IMR-90 (cell line): ENCODE measurements at regions of chr6 and their contacts with region 1.

Region 1: DNA sequence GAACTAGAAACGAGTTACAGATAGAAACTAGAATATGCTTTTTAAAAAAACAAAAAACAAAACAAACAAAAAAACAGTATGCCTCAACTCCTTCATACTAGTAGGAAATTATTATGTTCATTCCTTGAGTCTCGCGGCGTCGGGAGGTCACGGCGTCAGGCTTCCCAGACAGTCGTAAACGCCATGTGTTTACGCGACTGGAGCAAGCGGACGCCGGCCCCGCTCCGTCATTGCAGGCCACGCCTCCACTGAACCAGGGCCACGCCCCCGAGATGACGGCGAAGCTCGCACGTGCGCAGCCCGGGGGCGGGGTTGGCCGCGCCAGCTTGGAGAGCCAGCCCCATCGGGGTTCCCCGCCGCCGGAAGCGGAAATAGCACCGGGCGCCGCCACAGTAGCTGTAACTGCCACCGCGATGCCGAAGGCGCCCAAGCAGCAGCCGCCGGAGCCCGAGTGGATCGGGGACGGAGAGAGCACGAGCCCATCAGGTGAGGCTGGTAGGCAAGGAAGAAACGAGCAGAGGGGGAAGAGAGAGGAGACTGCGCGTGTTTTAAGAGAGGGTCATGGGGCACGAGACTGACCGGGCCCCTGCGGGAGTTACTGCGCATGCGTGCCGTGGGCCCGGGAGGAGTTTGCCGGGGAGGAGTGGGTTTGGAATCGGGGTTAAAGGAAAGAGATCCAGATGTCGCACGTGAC is at the start of gene ABCF1:
- DNase-seq: peak; percentile 96
- ATAC-seq: peak; percentile 98
- H3K4me3 ChIP-seq: peak within 1 kb of the TSS; percentile 74
- H3K27ac ChIP-seq: peak within 1 kb of the TSS; percentile 95
- H3K4me1 ChIP-seq: peaks cover 3% of the 10 kb centered on the region
- H3K27me3 ChIP-seq: no peaks in the 10 kb centered on the region
- CTCF ChIP-seq: no peak
- POLR2A ChIP-seq: peak; percentile 93
- RAD21 ChIP-seq: no peak
- total RNA-seq, gene ABCF1: 47.5 and 48.6 TPM in 2 replicates

Region 2: DNA sequence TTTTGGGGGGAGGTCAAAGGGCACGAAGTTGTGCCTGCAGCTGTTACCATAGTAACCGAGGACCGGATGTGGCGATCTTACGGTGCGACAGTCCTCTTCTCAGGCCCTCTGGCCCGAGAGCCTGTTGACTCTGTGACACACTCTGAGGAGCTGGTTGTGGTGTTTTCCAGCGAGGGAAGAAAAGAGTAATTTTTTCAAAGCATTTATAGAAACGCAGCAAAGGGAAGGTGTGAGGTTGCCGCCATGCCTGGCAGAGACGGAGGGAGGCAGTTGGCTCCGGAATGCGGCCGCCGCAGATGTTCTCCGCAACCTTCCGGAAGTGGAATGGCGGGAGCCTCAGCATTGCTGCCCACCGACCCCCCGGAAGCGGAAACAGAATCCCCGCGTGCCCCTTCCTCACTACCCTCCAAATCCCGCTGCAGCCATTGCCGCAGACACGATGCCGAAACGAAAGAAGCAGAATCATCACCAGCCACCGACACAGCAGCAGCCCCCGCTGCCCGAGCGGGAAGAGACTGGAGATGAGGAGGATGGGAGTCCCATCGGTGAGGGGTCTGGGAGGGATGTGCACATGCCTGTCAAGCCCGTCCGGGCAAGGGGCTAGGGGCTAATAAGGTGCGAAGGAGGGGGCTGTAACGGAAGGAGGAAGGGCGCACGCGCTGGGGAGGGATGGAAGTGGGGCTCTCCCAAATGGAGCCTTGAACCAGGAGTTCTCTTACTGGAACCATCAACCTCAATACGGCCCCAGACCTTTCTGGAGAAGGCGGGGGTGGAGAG is 14.1 kb before region 1 on chr6 and contains the start of gene PRR3:
- CTCF ChIA-PET with region 1: no interaction called
- POLR2A ChIA-PET with region 1: interaction called, 6 read pairs
- dilution Hi-C with region 1: no loop called
- in situ Hi-C with region 1: no loop called
- intact Hi-C with region 1: loop called (anchors 1 kb)
- DNase-seq: peak; percentile 88
- ATAC-seq: peak; percentile 67
- H3K4me3 ChIP-seq: peak within 1 kb of the TSS; percentile 94
- H3K27ac ChIP-seq: peak within 1 kb of the TSS; percentile 96
- H3K4me1 ChIP-seq: peaks cover 2% of the 10 kb centered on the region
- H3K27me3 ChIP-seq: no peaks in the 10 kb centered on the region
- CTCF ChIP-seq: no peak
- POLR2A ChIP-seq: peak; percentile 56; the same call in 1 of the 2 replicates
- RAD21 ChIP-seq: no peak
- total RNA-seq, gene PRR3: 7.2 TPM in 2 replicates

Region 3: GRCh38 chr6:30741063-30741779 is 170.0 kb after region 1 on chr6:
- CTCF ChIA-PET with region 1: no interaction called
- POLR2A ChIA-PET with region 1: no interaction called
- dilution Hi-C with region 1: no loop called
- in situ Hi-C with region 1: no loop called
- intact Hi-C with region 1: no loop called
- DNase-seq: peak; percentile 45
- ATAC-seq: no peak
- H3K4me3 ChIP-seq: peak overlapping the region; percentile 96
- H3K27ac ChIP-seq: peak overlapping the region; percentile 97
- H3K4me1 ChIP-seq: peaks cover 15% of the 10 kb centered on the region
- H3K27me3 ChIP-seq: no peaks in the 10 kb centered on the region
- CTCF ChIP-seq: no peak
- POLR2A ChIP-seq: peak; percentile 79
- RAD21 ChIP-seq: no peak

Region 4: GRCh38 chr6:30847421-30847970 is 276.3 kb after region 1 on chr6:
- CTCF ChIA-PET with region 1: no interaction called
- POLR2A ChIA-PET with region 1: no interaction called
- dilution Hi-C with region 1: no loop called
- in situ Hi-C with region 1: no loop called
- intact Hi-C with region 1: no loop called
- DNase-seq: no peak
- ATAC-seq: no peak
- H3K4me3 ChIP-seq: no peak overlapping the region
- H3K27ac ChIP-seq: no peak overlapping the region
- H3K4me1 ChIP-seq: peaks cover 14% of the 10 kb centered on the region
- H3K27me3 ChIP-seq: peaks cover 1% of the 10 kb centered on the region; the same call in 1 of the 2 replicates
- CTCF ChIP-seq: no peak
- POLR2A ChIP-seq: no peak
- RAD21 ChIP-seq: no peak